ENCODE measurements at regions of chr5 and their contacts with region 1.

Region 1: GRCh38 chr5:131252824-131253171 is 11.1 kb upstream of the CDC42SE2 start:
- DNase-seq: peak; percentile 70 to 89 (median 87)
- H3K4me3 ChIP-seq: peak overlapping the region; percentile 84
- H3K4me3 Mint-ChIP-seq: peak overlapping the region; percentile 92 to 99 (median 96)
- H3K27ac ChIP-seq: peak overlapping the region; percentile 82
- H3K27ac Mint-ChIP-seq: peak overlapping the region; percentile 88 to 99 (median 96)
- H3K4me1 ChIP-seq: peaks cover 49% of the 10 kb centered on the region
- H3K4me1 Mint-ChIP-seq: peaks cover 58 to 79% (median 73%) of the 10 kb centered on the region in 3 donors
- H3K27me3 ChIP-seq: no peaks in the 10 kb centered on the region
- H3K27me3 Mint-ChIP-seq: no peaks in the 10 kb centered on the region

Region 2: GRCh38 chr5:130762031-130762430 is 490.8 kb before region 1 on chr5:
- CTCF ChIA-PET with region 1: no interaction called
- POLR2A ChIA-PET with region 1: no interaction called
- DNase-seq: no peak
- H3K4me3 ChIP-seq: no peak overlapping the region
- H3K4me3 Mint-ChIP-seq: no peak overlapping the region
- H3K27ac ChIP-seq: no peak overlapping the region
- H3K27ac Mint-ChIP-seq: peak overlapping the region in 1 of 8 donors; percentile 59
- H3K4me1 ChIP-seq: no peaks in the 10 kb centered on the region
- H3K4me1 Mint-ChIP-seq: no peaks in the 10 kb centered on the region
- H3K27me3 ChIP-seq: no peaks in the 10 kb centered on the region
- H3K27me3 Mint-ChIP-seq: peaks cover 2 to 14% of the 10 kb centered on the region in 2 donors

Region 3: GRCh38 chr5:131198625-131199024 is 54.2 kb before region 1 on chr5:
- CTCF ChIA-PET with region 1: no interaction called
- POLR2A ChIA-PET with region 1: no interaction called
- DNase-seq: no peak
- H3K4me3 ChIP-seq: no peak overlapping the region
- H3K4me3 Mint-ChIP-seq: no peak overlapping the region
- H3K27ac ChIP-seq: no peak overlapping the region
- H3K27ac Mint-ChIP-seq: peak overlapping the region in 1 of 8 donors; percentile 3
- H3K4me1 ChIP-seq: no peaks in the 10 kb centered on the region
- H3K4me1 Mint-ChIP-seq: peaks cover 3 to 18% (median 6%) of the 10 kb centered on the region in 3 donors
- H3K27me3 ChIP-seq: no peaks in the 10 kb centered on the region
- H3K27me3 Mint-ChIP-seq: no peaks in the 10 kb centered on the region

Region 4: GRCh38 chr5:131209506-131210150 is 43.2 kb before region 1 on chr5:
- CTCF ChIA-PET with region 1: interaction called, 14 read pairs
- POLR2A ChIA-PET with region 1: interaction called, 7 read pairs
- DNase-seq: peak; percentile 10 to 87 (median 73)
- H3K4me3 ChIP-seq: peak overlapping the region; percentile 33
- H3K4me3 Mint-ChIP-seq: peak overlapping the region; percentile 41 to 85 (median 80)
- H3K27ac ChIP-seq: peak overlapping the region; percentile 52
- H3K27ac Mint-ChIP-seq: peak overlapping the region; percentile 82 to 99 (median 96)
- H3K4me1 ChIP-seq: peaks cover 51% of the 10 kb centered on the region
- H3K4me1 Mint-ChIP-seq: peaks cover 49 to 69% (median 61%) of the 10 kb centered on the region in 3 donors
- H3K27me3 ChIP-seq: no peaks in the 10 kb centered on the region
- H3K27me3 Mint-ChIP-seq: peaks cover 0 to 1% of the 10 kb centered on the region in 2 donors

Region 5: GRCh38 chr5:131230406-131230805 is 22.4 kb before region 1 on chr5:
- CTCF ChIA-PET with region 1: no interaction called
- POLR2A ChIA-PET with region 1: no interaction called
- DNase-seq: no peak
- H3K4me3 ChIP-seq: no peak overlapping the region
- H3K4me3 Mint-ChIP-seq: no peak overlapping the region
- H3K27ac ChIP-seq: no peak overlapping the region
- H3K27ac Mint-ChIP-seq: no peak overlapping the region
- H3K4me1 ChIP-seq: peaks cover 3% of the 10 kb centered on the region
- H3K4me1 Mint-ChIP-seq: peaks cover 6 to 11% (median 7%) of the 10 kb centered on the region in 3 donors
- H3K27me3 ChIP-seq: no peaks in the 10 kb centered on the region
- H3K27me3 Mint-ChIP-seq: no peaks in the 10 kb centered on the region

Region 6: DNA sequence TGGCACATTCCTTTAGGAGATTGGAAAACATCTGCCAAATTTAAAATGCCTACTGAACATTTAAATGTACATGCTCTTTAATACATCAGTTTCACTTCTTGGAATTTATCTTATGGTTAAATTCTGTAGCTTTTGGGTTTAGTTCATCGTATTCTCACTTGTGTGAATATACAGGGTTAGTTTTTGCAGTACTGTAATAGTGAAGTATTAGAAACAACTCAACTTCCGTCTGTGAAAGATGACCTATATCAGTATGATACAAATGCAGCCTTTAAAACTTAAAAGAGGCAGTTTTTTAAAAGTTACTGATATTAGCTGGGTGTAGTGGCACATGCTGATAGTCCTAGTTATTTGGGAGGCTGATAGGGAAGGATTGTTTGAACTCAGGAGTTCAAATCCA is 68.3 kb after region 1 on chr5:
- CTCF ChIA-PET with region 1: no interaction called
- POLR2A ChIA-PET with region 1: no interaction called
- DNase-seq: no peak
- H3K4me3 ChIP-seq: no peak overlapping the region
- H3K4me3 Mint-ChIP-seq: peak overlapping the region; percentile 22 to 77 (median 34)
- H3K27ac ChIP-seq: no peak overlapping the region
- H3K27ac Mint-ChIP-seq: peak overlapping the region; percentile 58 to 94 (median 74)
- H3K4me1 ChIP-seq: peaks cover 41% of the 10 kb centered on the region
- H3K4me1 Mint-ChIP-seq: peaks cover 70 to 89% (median 84%) of the 10 kb centered on the region in 3 donors
- H3K27me3 ChIP-seq: no peaks in the 10 kb centered on the region
- H3K27me3 Mint-ChIP-seq: no peaks in the 10 kb centered on the region